Esophagus squamous epithelium (tissue), 5 donors: ENCODE measurements at regions of chr11 and their contacts with region 1.

Region 1: DNA sequence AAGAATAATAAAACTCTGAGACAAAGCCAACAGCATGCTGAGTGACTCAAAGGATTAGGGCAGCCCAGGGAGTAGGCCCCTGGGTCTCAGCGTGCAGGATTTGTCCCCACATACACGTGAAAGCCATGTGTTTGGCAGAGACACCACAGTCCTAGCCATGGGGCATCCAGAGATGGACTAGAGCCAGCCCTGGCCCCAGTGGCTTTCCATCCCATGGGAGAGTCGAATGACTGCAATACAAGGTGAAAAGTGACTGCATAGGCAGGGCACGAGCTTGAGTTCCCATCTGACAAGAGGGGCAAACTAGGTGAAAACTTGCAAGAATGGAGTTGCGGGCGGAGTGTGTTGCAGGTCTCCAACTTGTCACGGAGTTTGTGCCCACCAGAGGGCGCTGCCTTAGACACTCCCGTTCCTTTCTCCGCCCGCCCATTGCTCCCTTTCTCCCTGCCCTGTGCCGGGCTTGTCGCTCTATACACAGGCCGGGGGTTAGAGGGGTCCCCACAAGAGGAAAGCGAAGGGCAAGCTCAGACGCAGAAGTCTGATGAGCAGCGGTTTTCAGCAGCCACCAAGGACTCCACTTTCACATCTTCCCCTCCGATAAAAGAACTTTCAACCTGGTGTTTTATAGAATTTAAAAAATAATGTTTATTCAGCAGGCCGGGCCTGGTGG is 24.2 kb downstream of the TSKU start:
- DNase-seq: no peak
- H3K4me3 ChIP-seq: peak overlapping the region in 1 of 4 donors; percentile 40
- H3K27ac ChIP-seq: peak overlapping the region in 3 of 4 donors; percentile 20 to 56 (median 33)
- H3K4me1 ChIP-seq: peaks cover 17 to 64% (median 33%) of the 10 kb centered on the region in 3 donors
- H3K27me3 ChIP-seq: no peaks in the 10 kb centered on the region
- CTCF ChIP-seq: peak; percentile 67 to 86 (median 74)
- POLR2A ChIP-seq: no peak

Region 2: DNA sequence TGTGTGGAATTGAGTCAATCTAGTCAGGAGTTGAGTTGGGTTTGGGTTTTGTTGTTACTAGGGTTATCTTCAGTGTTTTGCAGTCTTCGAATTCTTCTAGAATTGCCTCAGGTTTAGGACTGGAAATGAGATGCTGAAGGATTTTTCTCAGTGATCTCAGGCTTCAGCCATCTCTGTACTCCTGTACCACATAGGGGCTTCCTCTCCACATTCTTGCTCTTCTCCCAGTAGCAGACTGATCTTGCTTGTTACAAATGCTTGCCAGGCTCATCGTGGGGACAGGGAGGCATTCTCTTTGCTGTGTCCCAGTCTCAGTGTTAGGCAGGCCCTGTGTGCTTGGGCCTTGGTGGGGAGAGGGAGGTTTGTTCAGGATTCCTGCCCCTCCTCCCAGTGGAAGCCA is 232.9 kb before region 1 on chr11:
- intact Hi-C with region 1: no loop called
- DNase-seq: no peak
- H3K4me3 ChIP-seq: no peak overlapping the region
- H3K27ac ChIP-seq: no peak overlapping the region
- H3K4me1 ChIP-seq: peaks cover 7 to 37% (median 21%) of the 10 kb centered on the region in 3 donors
- H3K27me3 ChIP-seq: no peaks in the 10 kb centered on the region
- CTCF ChIP-seq: no peak
- POLR2A ChIP-seq: no peak

Region 3: GRCh38 chr11:76919887-76920746 is 112.8 kb after region 1 on chr11:
- intact Hi-C with region 1: loop called (anchors 5 kb)
- DNase-seq: peak; percentile 21
- H3K4me3 ChIP-seq: peak overlapping the region in 1 of 4 donors; percentile 35
- H3K27ac ChIP-seq: peak overlapping the region in 2 of 4 donors; percentile 3 to 14
- H3K4me1 ChIP-seq: peaks cover 3 to 20% (median 4%) of the 10 kb centered on the region in 3 donors
- H3K27me3 ChIP-seq: no peaks in the 10 kb centered on the region
- CTCF ChIP-seq: peak; percentile 81 to 95 (median 88)
- POLR2A ChIP-seq: no peak